ENCODE measurements at regions of chr14 and their contacts with region 1.

Region 1: DNA sequence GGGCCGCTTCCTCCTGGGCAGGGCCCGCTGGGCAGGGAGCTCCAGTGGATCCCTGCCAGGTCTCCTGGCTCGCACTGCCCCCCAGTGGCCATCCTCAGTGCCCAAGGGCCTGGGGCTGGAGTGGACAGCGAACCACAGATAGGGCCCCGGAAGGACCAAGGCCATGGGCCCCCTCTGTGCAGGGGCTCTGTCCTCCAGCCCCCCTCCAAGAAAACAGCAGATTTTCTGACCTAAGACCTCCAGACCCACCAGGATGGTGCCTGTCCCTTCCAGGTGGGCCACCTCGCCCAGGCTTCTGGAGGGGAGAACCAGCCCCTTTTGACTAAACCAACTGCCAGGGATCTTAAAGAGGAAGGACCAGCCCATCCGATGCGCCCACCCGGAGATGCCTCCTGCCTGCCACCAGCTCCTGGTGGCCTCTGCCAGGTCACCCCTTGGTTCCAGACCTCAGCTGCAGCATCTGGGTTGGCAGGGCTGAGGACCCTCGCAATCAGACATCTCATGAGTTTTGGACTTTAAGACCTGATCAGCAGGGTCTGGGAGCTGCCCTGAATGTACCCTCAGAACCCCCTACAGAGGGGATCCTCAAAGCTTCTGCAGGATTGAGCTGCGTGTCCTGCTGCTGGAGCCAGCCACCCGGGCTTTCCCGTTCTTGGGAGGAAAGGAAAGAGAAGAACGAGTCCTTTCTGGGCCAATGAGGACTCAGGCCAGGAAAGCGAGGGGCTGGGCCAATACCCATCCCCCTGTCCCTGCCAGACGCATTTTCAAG is 325.8 kb upstream of the DIO3 start:
- DNase-seq: peak; percentile 78
- ATAC-seq: peak; percentile 96
- H3K4me3 ChIP-seq: no peak overlapping the region
- H3K27ac ChIP-seq: no peak overlapping the region
- H3K4me1 ChIP-seq: no peaks in the 10 kb centered on the region
- H3K27me3 ChIP-seq: no peaks in the 10 kb centered on the region
- CTCF ChIP-seq: peak; percentile 87

Region 2: GRCh38 chr14:100850841-100851585 is 384.5 kb before region 1 on chr14:
- CTCF ChIA-PET with region 1: interaction called, 4 read pairs
- POLR2A ChIA-PET with region 1: no interaction called
- intact Hi-C with region 1: loop called (anchors 1 kb)
- DNase-seq: peak; percentile 91
- ATAC-seq: peak; percentile 88
- H3K4me3 ChIP-seq: no peak overlapping the region
- H3K27ac ChIP-seq: no peak overlapping the region
- H3K4me1 ChIP-seq: peaks cover 11% of the 10 kb centered on the region
- H3K27me3 ChIP-seq: no peaks in the 10 kb centered on the region
- CTCF ChIP-seq: peak; percentile 93

Region 3: DNA sequence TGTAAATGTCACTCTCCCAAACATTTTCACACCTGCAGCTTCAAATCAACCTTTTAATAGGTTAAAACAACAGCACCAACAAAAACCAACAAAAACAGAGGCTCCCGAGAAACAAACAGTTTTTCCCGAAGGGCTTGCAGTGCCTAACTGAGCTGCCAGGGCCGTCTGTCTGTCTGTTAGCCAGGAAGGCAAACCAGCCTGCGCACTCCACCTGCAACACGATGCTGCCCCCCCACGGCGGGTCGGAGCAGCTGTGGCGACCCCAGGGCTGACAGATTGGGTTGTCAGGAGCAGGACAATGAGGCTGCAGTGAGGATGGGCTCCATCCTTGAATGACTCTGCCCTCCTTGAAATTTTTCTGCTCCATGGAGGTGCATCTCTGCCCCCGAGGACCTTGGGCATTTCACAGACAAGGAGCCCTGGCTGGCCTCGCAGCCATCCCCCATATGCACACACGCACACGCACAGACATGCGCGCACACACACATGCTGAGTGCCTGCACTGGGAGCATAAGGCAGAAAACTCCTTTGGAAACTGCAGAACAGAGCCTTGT is 334.6 kb before region 1 on chr14:
- CTCF ChIA-PET with region 1: interaction called, 3 read pairs
- POLR2A ChIA-PET with region 1: no interaction called
- intact Hi-C with region 1: loop called (anchors 2 kb)
- DNase-seq: peak; percentile 48
- ATAC-seq: peak; percentile 65
- H3K4me3 ChIP-seq: peak overlapping the region; percentile 56
- H3K27ac ChIP-seq: no peak overlapping the region
- H3K4me1 ChIP-seq: peaks cover 8% of the 10 kb centered on the region
- H3K27me3 ChIP-seq: peaks cover 21% of the 10 kb centered on the region
- CTCF ChIP-seq: peak; percentile 61

Region 4: DNA sequence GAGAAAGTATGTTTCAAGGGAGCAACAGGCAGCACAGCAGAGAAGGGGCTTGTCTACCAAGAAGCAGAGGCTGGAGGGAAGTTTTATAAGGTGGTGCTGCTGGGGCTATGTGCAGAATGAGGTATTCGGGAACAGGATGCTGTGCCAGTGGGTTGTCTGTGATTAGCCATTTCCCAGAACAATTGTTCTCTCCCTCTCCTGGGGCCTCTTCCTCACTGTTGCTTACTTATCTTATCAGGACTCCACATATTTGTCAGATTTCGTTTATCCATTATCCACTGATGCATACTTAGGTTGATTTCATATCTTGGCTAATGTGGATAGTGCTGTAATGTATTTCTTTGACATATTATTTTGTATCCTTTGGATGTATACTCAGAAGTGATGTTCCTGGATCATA is 136.9 kb before region 1 on chr14:
- CTCF ChIA-PET with region 1: no interaction called
- POLR2A ChIA-PET with region 1: no interaction called
- intact Hi-C with region 1: loop called (anchors 10 kb)
- DNase-seq: no peak
- ATAC-seq: no peak
- H3K4me3 ChIP-seq: no peak overlapping the region
- H3K27ac ChIP-seq: no peak overlapping the region
- H3K4me1 ChIP-seq: peaks cover 19% of the 10 kb centered on the region
- H3K27me3 ChIP-seq: no peaks in the 10 kb centered on the region
- CTCF ChIP-seq: no peak